Endothelial cell of umbilical vein (primary cell): ENCODE measurements at regions of chr3 and their contacts with region 1.

Region 1: DNA sequence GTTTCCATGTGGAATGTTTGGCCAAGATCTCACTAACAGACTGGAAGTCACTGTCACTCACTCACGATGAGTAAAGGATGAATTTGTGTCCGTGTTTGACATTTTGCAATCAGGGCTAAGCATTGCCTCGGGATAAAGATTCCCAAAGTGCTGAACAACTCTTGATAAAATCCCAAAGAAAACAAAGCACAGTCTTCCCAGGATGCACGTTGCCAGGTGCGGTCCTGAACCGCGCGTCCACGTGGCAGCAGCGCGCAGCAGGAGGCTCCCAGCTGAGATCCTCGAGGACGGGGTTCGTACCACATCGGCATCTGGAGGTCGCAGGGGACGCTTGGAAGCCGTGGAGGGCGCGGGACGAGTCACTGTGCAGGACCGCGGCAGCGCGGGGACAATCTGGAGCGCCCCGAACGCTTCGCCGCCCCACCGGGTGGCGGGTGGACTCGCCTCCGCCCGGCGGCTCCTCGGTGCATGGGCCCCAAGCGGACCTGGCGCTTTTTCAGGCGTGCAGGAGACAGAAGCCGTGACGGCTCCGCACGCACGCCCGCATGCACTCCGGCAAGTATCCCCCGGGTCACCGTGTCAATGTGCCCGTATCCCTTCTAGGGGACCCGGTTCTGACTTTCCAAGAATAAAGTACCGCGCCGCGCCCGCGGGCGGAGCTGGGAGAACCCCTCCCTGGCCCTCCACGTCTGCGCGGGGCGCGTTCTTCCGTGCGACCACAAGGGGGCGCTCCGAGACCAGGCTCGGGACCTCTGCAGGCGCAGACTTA is 17.7 kb downstream of the CPN2 start:
- DNase-seq: peak; percentile 83
- H3K4me3 ChIP-seq: peak overlapping the region; percentile 11 to 50 (median 35)
- H3K27ac ChIP-seq: no peak overlapping the region
- H3K4me1 ChIP-seq: peaks cover 5% of the 10 kb centered on the region
- H3K27me3 ChIP-seq: peaks cover 0 to 17% of the 10 kb centered on the region in 2 experiments
- CTCF ChIP-seq: peak; percentile 96 to 98
- POLR2A ChIP-seq: no peak

Region 2: DNA sequence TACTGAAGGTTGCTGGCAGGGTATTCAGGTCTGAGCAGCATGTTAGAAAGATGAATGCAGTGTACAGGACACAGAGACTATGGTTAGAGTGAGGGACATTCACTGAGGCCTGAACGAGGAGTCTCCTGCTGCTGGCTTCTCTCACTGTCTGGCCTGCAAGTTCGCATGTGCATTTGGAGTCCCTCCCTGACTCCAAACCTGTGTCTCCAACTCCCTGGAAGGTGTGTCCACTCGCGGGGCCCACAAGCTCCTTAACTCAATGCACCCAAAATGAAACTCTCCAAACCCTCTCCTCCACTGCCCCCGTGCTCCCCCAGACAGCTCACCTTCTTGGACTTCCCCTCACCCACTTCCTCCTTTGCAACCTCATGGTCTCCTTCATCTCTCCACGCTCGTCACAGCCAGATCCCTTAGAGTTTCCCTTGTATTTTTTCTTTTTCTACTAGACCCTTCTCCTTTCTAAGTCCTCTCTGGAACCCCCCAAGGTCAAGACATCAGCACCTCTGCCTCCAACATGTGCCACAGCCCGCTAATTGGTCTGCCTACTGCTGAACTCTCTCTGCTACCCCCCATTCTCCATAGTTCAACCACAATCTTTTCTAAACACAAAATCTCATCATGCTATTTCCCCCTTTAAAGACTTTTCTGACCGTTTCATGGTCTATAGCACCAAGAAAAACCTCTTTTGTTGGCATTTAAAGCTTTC is 139.2 kb before region 1 on chr3:
- CTCF ChIA-PET with region 1: no interaction called
- POLR2A ChIA-PET with region 1: no interaction called
- dilution Hi-C with region 1: no loop called
- intact Hi-C with region 1: no loop called
- DNase-seq: no peak
- H3K4me3 ChIP-seq: no peak overlapping the region
- H3K27ac ChIP-seq: no peak overlapping the region
- H3K4me1 ChIP-seq: peaks cover 8% of the 10 kb centered on the region
- H3K27me3 ChIP-seq: peaks cover 0 to 2% of the 10 kb centered on the region in 2 experiments
- CTCF ChIP-seq: no peak
- POLR2A ChIP-seq: no peak

Region 3: DNA sequence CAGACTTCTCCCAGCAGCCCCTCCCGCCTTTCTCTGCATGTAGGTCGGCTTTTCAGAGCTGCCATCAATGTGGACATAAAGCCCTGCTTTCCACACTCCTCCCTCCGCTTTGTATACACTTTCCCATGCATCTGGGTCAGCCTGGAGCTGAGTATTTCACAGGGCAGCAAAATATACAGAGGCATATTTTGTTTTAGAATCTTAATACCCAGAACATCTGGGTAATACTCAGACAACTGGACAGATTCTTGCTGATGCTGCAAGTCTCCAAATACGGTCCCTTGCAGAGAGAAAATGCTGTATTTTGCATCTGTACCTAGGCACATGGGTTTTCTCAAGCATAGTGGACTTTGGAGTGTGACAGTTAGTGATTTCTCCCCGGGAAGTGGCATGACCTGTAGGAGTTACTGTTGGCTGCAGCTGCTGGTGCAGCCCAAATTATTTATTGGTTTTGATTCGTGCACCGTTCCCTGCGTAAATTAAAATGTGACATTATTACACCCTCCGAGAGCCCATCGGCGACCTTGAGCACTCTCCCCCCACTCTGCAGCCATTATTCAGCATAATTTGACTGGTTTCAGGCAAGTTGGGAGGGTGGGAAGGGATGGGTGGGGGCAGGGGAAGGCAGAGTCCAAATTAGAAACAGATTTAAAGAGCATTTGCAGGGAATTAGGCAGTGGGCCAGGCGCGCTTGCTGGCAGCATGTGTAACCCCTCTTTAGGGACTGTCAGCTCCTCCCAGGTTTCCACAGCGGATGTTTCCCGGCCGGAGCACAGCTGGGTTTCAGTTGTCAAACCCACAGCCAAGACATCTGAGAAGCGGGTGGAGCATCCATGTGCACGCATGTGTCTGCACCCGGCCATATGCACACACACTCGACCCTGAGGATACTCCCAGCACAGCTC is 83.0 kb before region 1 on chr3:
- CTCF ChIA-PET with region 1: no interaction called
- POLR2A ChIA-PET with region 1: no interaction called
- dilution Hi-C with region 1: no loop called
- intact Hi-C with region 1: no loop called
- DNase-seq: no peak
- H3K4me3 ChIP-seq: no peak overlapping the region
- H3K27ac ChIP-seq: no peak overlapping the region
- H3K4me1 ChIP-seq: peaks cover 7% of the 10 kb centered on the region
- H3K27me3 ChIP-seq: no peaks in the 10 kb centered on the region
- CTCF ChIP-seq: no peak
- POLR2A ChIP-seq: no peak

Region 4: DNA sequence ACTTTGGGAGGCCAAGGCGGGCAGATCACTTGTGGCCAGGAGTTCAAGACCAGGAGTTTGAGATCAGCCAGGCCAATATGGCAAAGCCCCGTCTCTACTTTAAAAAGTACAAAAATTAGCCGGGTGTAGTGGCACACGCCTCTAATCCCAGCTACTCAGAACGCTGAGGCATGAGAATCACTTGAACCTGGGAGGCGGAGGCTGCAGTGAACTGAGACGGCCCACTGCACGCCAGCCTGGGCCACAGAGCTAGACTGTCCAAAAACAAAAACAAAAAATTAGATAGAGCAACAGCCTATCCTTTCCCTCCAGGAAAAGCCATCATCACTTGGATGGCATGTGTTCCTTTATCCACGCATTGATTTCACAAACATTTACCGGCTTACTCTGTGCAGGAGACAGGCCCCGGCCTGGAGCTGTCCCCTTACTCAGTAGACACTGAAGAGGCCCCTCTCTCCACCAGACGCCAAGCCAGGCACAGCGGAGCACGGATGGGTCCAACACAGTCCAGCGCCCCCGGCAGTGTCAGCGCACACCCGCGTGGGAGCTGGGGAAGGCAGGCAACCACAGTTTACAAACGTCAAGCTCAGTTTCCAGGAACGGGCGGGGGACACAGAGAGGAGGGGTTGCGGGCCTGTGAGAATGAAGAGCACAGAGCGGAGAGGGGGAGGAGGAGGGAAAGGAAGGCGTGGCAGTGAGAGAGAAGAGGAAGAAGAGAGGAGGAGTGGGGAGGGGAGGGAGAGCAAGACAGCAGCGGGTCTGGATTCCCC is 62.6 kb after region 1 on chr3:
- CTCF ChIA-PET with region 1: interaction called, 20 read pairs
- POLR2A ChIA-PET with region 1: no interaction called
- dilution Hi-C with region 1: no loop called
- intact Hi-C with region 1: no loop called
- DNase-seq: no peak
- H3K4me3 ChIP-seq: no peak overlapping the region
- H3K27ac ChIP-seq: no peak overlapping the region
- H3K4me1 ChIP-seq: peaks cover 6% of the 10 kb centered on the region
- H3K27me3 ChIP-seq: peaks cover 24 to 59% of the 10 kb centered on the region in 2 experiments
- CTCF ChIP-seq: no peak
- POLR2A ChIP-seq: no peak

Region 5: DNA sequence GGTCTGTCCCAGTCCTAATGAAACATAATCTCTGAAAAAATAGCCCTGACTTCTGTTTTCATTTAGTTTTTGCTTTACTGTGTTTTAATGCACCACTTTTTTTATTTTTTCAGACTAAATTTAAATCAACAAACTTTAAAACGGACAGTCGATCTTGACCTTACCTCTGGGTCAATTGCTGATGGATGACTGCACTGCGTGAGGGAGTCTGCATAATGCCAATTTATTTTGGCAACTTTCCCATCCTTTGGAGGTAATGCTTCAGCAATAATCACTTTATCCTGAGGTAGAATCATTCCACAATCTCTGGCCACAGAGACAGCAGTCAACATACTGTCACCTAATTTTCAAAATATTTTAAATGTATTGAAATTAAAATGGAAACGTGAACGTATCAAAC is 98.2 kb after region 1 on chr3:
- CTCF ChIA-PET with region 1: no interaction called
- POLR2A ChIA-PET with region 1: no interaction called
- dilution Hi-C with region 1: no loop called
- intact Hi-C with region 1: no loop called
- DNase-seq: no peak
- H3K4me3 ChIP-seq: no peak overlapping the region
- H3K27ac ChIP-seq: no peak overlapping the region
- H3K4me1 ChIP-seq: no peaks in the 10 kb centered on the region
- H3K27me3 ChIP-seq: no peaks in the 10 kb centered on the region
- CTCF ChIP-seq: no peak
- POLR2A ChIP-seq: no peak

Region 6: GRCh38 chr3:194472290-194472920 is 139.0 kb after region 1 on chr3:
- CTCF ChIA-PET with region 1: interaction called, 5 read pairs
- POLR2A ChIA-PET with region 1: interaction called, 7 read pairs
- dilution Hi-C with region 1: no loop called
- intact Hi-C with region 1: loop called (anchors 5 kb)
- DNase-seq: peak; percentile 67
- H3K4me3 ChIP-seq: no peak overlapping the region
- H3K27ac ChIP-seq: no peak overlapping the region
- H3K4me1 ChIP-seq: peaks cover 3% of the 10 kb centered on the region
- H3K27me3 ChIP-seq: no peaks in the 10 kb centered on the region
- CTCF ChIP-seq: peak; percentile 80 to 85
- POLR2A ChIP-seq: no peak

Region 7: GRCh38 chr3:194583604-194584318 is 250.4 kb after region 1 on chr3:
- CTCF ChIA-PET with region 1: interaction called, 11 read pairs
- POLR2A ChIA-PET with region 1: no interaction called
- dilution Hi-C with region 1: no loop called
- intact Hi-C with region 1: loop called (anchors 2 kb)
- DNase-seq: peak; percentile 95
- H3K4me3 ChIP-seq: peak overlapping the region; percentile 27 to 91 (median 61)
- H3K27ac ChIP-seq: peak overlapping the region; percentile 80
- H3K4me1 ChIP-seq: peaks cover 49% of the 10 kb centered on the region
- H3K27me3 ChIP-seq: no peaks in the 10 kb centered on the region
- CTCF ChIP-seq: no peak
- POLR2A ChIP-seq: peak; percentile 94

Region 8: DNA sequence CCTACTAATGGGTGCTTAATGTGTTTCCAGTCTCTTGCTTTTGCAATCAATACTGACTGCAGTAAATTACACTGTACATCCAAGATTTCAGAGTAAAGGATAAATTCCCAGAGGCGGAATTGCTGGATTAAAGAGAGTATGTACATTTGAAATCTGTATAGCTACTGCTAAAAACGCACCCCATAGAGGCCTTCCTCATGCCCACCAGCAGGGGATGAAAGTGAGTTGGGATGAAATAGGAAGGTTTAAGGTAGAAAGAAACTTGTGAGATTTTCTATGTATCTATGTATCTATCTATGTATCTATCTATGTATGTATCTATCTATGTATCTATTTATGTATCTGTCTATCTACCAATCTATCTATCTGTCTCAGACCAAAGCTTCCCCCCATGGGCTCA is 271.4 kb after region 1 on chr3:
- CTCF ChIA-PET with region 1: no interaction called
- POLR2A ChIA-PET with region 1: no interaction called
- dilution Hi-C with region 1: no loop called
- intact Hi-C with region 1: no loop called
- DNase-seq: no peak
- H3K4me3 ChIP-seq: no peak overlapping the region
- H3K27ac ChIP-seq: no peak overlapping the region
- H3K4me1 ChIP-seq: no peaks in the 10 kb centered on the region
- H3K27me3 ChIP-seq: no peaks in the 10 kb centered on the region
- CTCF ChIP-seq: peak; percentile 29 to 44
- POLR2A ChIP-seq: no peak

Region 9: GRCh38 chr3:194661374-194661773 is 328.0 kb after region 1 on chr3:
- CTCF ChIA-PET with region 1: no interaction called
- POLR2A ChIA-PET with region 1: no interaction called
- dilution Hi-C with region 1: no loop called
- intact Hi-C with region 1: loop called (anchors 1 kb)
- DNase-seq: peak; percentile 88
- H3K4me3 ChIP-seq: peak overlapping the region in 1 of 3 experiments; percentile 5
- H3K27ac ChIP-seq: peak overlapping the region; percentile 70
- H3K4me1 ChIP-seq: peaks cover 66% of the 10 kb centered on the region
- H3K27me3 ChIP-seq: no peaks in the 10 kb centered on the region
- CTCF ChIP-seq: no peak
- POLR2A ChIP-seq: peak; percentile 58